Cardiac septum (tissue), 1 donor: ENCODE measurements at regions of chr12 and their contacts with region 1.

Region 1: DNA sequence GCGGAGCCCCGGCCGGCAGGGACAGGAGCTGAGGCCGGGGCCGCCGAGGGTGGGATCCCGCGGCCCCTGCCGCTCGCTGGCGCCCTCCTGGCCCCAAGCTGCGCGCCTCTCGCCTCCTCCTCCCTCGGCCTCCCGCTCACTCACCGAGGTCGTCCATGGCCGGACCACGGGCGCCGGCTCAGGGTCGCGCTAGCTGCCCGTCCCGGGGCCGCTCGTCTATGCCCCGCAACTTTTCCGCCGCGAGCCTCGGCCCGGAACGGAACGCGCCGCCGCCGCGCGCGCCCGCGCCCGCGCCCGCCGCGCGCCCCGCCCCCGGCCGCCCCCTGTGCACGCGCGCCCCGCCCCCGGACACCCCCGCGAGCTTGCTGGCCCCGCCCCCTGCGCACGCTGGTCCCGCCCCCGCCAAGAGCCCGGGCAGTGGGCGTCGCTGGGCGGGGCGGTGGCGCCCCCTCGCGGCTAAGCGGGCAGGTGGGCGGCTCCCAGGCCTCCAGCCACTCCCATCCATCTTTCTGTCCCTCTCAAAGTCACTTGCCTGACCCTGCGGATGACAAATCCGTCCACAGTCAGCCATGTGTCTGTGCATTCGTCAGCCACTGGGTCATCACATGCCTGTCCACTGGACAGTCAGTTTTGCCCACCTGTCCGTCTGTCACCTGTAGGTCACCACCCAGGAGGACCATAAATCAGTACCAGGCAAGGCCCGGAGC is at the start of gene PXN:
- DNase-seq: peak; percentile 97
- total RNA-seq, gene PXN: 73.8 TPM

Region 2: DNA sequence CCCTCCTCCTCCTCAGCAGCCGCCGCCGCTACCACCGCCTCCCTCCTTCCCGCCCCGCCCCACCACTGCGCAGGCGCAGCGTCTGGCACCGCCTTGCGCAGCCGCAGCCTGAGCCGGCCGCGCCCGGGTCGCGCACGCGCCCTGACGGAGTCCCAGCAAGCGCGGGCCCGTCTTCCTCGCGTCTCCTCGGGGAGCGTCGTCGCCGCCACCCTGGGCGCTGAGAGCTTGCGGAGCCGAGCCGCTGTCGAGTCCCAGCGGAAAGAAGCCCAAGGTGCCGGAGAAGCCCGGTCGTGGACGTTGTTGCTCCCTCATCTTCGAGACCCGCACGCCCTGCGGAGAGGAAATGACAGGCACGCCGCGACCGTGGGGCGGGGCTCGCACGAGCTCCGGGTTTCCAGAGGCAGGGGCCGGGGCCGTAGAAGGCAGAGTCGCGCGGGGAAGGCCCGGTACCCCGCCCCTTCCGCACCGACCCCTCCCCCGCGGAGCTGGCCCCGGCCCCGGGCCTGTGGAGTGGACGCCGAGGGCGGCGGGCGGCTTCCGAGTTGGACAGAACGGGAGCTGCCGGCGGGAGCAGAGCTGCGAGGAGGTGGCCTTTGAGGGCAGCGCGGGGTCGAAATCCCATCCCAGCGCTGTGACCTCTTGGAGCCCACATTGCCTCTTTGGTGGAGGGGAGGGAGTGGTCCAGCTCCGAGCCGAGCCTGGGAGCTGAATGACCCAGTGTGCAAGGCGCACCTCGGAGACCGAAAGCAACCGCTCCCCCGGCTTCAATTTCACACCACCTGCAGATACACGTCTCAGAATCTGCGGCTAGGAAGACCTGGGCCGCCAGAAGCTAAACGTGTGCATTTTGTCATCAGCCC is 148.6 kb before region 1 on chr12:
- intact Hi-C with region 1: loop called (anchors 10 kb)
- DNase-seq: peak; percentile 98

Region 3: DNA sequence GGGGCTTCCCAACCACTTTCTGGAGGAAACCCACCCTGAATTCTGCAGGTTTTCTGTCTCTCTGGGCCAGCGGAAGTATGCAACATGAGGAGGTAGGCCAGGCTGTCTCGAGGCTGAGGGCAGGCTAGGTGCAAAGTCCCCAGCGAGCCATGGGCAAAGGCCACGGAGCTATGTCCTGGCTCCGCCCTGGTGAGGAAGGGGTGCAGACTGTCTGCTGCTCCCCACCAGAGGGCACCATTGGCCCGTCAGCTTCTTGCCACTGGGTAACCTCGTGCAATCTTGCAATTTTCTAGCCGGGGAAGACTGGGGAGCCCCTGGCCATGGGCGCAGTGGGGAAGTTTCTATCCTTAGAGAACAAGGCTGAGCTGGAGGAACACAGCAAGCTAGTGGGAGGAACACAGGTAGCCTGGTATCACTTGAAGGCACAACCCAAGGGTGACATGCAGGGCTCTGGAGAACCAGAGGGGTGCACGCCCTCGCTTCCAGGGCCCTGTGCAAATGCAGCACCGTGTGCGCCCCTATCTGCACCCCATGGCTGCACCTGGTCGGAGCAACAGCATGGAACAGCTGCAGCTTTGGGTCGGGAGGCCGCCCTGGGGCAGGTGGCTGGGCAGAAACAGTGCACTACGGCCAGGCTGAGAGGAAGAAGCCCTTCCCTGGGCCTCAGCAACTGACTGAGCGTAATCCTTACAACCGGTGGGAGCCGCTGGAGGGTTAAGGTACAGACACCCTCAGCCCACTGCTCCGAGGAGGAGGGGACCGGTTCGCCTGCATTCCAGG is 37.1 kb before region 1 on chr12:
- intact Hi-C with region 1: loop called (anchors 1 kb)
- DNase-seq: peak; percentile 94

Region 4: GRCh38 chr12:120290541-120291309 is 25.1 kb after region 1 on chr12:
- intact Hi-C with region 1: loop called (anchors 2 kb)
- DNase-seq: no peak

Region 5: GRCh38 chr12:120356567-120357030 is 91.0 kb after region 1 on chr12:
- intact Hi-C with region 1: no loop called
- DNase-seq: peak; percentile 89

Region 6: DNA sequence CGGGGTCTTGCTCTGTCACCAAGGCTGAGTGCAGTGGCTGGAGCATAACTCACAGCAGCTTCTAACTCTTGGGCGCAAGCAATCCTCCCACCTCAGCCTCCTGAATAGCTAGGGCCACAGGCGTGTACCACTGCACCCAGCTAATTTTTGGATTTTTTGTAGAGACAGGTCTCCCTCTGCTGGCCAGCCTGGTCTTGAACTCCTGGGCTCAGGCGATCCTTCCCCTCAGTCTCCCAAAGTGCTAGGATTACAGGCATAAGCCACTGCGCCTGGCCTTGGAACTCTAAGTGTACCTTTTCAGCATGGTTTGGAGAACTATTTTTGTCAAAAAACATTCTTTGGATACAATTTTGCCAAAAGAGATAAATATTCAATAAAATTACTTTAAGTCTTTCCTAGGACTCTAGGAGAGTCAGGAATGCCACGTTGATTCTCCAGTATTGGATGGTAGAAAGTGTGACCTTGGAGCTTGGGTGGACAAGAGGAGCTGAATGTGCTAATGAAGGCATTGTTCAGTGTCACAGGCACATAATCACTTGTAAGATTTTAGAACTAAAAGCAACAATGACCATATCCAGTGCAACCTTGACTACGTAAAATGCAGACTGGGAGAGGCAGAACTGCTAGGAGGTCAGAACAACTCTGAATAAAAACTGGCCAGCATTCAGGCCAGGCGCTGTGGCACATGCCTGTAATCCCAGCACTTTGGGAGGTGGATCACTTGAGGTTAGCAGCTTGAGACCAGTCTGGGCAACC is 201.1 kb after region 1 on chr12:
- intact Hi-C with region 1: no loop called
- DNase-seq: no peak